ENCODE measurements at regions of chr9 and their contacts with region 1.

Region 1: GRCh38 chr9:16335788-16336580 is 534.5 kb downstream of the BNC2 start:
- DNase-seq: peak; percentile 99
- ATAC-seq: peak; percentile 91
- H3K4me3 ChIP-seq: no peak overlapping the region
- H3K27ac ChIP-seq: peak overlapping the region; percentile 96
- H3K4me1 ChIP-seq: peaks cover 18% of the 10 kb centered on the region
- H3K27me3 ChIP-seq: no peaks in the 10 kb centered on the region
- CTCF ChIP-seq: no peak
- POLR2A ChIP-seq: no peak
- RAD21 ChIP-seq: peak; percentile 29

Region 2: GRCh38 chr9:15333376-15333881 is 1002.6 kb before region 1 on chr9:
- CTCF ChIA-PET with region 1: no interaction called
- POLR2A ChIA-PET with region 1: no interaction called
- dilution Hi-C with region 1: no loop called
- in situ Hi-C with region 1: no loop called
- intact Hi-C with region 1: no loop called
- DNase-seq: no peak
- ATAC-seq: no peak
- H3K4me3 ChIP-seq: no peak overlapping the region
- H3K27ac ChIP-seq: no peak overlapping the region
- H3K4me1 ChIP-seq: no peaks in the 10 kb centered on the region
- H3K27me3 ChIP-seq: peaks cover 6% of the 10 kb centered on the region; the same call in 1 of the 2 replicates
- CTCF ChIP-seq: no peak
- POLR2A ChIP-seq: no peak
- RAD21 ChIP-seq: no peak

Region 3: GRCh38 chr9:15543047-15543813 is 792.8 kb before region 1 on chr9:
- CTCF ChIA-PET with region 1: no interaction called
- POLR2A ChIA-PET with region 1: no interaction called
- dilution Hi-C with region 1: no loop called
- in situ Hi-C with region 1: no loop called
- intact Hi-C with region 1: no loop called
- DNase-seq: peak; percentile 46
- ATAC-seq: peak; percentile 72
- H3K4me3 ChIP-seq: no peak overlapping the region
- H3K27ac ChIP-seq: no peak overlapping the region
- H3K4me1 ChIP-seq: peaks cover 5% of the 10 kb centered on the region
- H3K27me3 ChIP-seq: no peaks in the 10 kb centered on the region
- CTCF ChIP-seq: no peak
- POLR2A ChIP-seq: no peak
- RAD21 ChIP-seq: no peak

Region 4: GRCh38 chr9:16505199-16505598 is 169.2 kb after region 1 on chr9:
- CTCF ChIA-PET with region 1: no interaction called
- POLR2A ChIA-PET with region 1: no interaction called
- dilution Hi-C with region 1: no loop called
- in situ Hi-C with region 1: no loop called
- intact Hi-C with region 1: loop called (anchors 5 kb)
- DNase-seq: peak; percentile 80
- ATAC-seq: peak; percentile 84
- H3K4me3 ChIP-seq: no peak overlapping the region
- H3K27ac ChIP-seq: peak overlapping the region; percentile 95
- H3K4me1 ChIP-seq: peaks cover 16% of the 10 kb centered on the region
- H3K27me3 ChIP-seq: no peaks in the 10 kb centered on the region
- CTCF ChIP-seq: no peak
- POLR2A ChIP-seq: no peak
- RAD21 ChIP-seq: no peak